ENCODE measurements at regions of chr9 and their contacts with region 1.

Region 1: GRCh38 chr9:115013998-115014397 is 83.6 kb upstream of the TNFSF8 start:
- DNase-seq: peak; percentile 70
- CTCF ChIP-seq: peak; percentile 53

Region 2: GRCh38 chr9:114738581-114739316 is 275.2 kb before region 1 on chr9:
- CTCF ChIA-PET with region 1: interaction called, 14 read pairs
- POLR2A ChIA-PET with region 1: no interaction called
- DNase-seq: peak; percentile 62
- CTCF ChIP-seq: peak; percentile 52

Region 3: DNA sequence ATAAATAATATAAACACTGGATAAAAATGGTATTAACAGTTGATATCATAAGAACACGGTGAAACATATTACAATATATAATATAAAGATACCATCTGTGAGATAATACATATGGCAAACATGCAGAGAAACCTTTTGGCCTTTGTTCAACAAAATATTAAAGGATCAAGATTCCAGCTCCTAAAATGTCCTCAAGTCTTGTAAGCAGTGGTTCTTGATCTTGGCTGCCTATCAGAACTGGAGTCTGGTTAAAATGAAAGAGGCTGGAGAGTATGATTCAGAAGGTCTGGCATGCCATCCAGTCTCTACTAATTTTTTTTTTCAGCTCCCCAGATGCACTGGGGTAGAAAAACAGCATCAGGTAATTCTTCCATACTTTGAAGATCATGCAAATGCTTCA is 20.8 kb after region 1 on chr9:
- CTCF ChIA-PET with region 1: interaction called, 20 read pairs
- POLR2A ChIA-PET with region 1: no interaction called
- DNase-seq: no peak
- CTCF ChIP-seq: no peak

Measured in GM10248 (cell line).